ENCODE measurements at regions of chr13 and their contacts with region 1.

Region 1: DNA sequence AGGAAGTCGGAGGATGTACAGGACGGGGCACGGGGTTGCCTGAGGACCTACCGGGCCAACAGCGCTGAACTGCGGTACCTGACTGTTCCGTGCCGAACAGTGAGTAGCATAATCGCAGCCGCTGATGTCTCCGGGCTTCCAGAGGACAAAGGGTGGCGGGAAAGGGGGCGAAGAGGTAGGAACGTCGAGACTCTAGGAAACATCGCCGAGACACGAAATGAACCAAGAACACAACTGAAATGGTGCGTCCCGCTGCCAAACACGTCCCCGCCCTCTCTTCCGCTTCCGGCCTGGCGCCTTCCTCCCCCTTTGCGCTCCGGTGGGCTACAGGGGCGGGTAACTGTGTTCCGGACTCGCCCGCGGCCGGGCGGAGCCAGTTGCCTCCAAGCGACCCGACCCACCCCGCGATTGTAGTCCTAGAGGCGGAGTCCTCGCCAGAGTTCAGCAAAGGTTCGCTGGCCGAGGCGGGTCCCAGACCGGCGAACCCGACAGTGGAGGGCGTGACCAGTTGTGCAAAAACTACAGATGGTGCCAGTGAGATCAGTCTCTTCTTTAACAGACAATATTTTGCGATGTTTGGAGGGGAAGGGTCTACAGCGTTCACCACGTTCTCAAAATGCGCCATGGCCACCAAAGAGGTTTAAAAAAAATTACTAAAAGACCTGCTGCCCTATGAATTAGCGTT is at the start of gene MRPS31:
- DNase-seq: peak; percentile 98
- ATAC-seq: peak; percentile 100
- total RNA-seq, gene MRPS31: 30.0 TPM

Region 2: DNA sequence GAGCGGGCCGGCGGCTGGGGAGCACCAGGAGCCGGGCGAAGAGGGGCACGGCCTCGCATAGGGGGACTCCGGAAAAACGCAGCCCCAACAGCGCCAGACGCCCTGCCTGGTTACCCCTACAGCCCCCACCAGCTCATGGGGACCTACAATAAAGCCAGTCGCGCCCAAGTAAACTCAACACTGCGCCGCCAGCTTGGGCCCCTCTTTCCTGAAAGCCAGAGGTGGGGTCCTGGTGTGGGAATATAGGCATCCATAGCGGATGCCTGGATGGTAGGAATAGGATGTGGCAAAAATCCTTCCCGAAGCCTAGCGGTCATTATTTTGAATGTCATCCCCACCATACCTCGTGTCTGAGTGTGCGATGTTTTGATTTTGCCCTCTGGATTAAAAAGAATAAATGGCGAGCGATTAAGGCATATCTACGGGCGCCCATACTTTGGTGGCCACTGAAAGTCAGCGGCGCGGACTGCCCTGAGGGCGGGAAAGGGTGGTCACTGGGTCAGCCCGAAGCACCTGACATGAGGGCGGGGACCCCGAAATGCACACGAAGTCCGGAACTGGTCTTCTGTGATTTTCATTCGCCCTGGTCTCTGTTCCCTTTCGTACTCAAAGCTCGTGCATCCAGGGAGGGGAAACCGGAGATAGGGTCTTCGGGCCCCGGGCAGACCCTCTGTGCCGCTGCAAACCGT is 1733.1 kb before region 1 on chr13 and contains the starts of genes NHLRC3 and PROSER1:
- intact Hi-C with region 1: loop called (anchors 10 kb)
- DNase-seq: peak; percentile 94
- ATAC-seq: peak; percentile 96
- total RNA-seq, gene NHLRC3: 9.5 TPM
- total RNA-seq, gene PROSER1: 15.9 TPM

Region 3: GRCh38 chr13:40706439-40706838 is 64.6 kb before region 1 on chr13:
- intact Hi-C with region 1: no loop called
- DNase-seq: no peak
- ATAC-seq: no peak

Region 4: DNA sequence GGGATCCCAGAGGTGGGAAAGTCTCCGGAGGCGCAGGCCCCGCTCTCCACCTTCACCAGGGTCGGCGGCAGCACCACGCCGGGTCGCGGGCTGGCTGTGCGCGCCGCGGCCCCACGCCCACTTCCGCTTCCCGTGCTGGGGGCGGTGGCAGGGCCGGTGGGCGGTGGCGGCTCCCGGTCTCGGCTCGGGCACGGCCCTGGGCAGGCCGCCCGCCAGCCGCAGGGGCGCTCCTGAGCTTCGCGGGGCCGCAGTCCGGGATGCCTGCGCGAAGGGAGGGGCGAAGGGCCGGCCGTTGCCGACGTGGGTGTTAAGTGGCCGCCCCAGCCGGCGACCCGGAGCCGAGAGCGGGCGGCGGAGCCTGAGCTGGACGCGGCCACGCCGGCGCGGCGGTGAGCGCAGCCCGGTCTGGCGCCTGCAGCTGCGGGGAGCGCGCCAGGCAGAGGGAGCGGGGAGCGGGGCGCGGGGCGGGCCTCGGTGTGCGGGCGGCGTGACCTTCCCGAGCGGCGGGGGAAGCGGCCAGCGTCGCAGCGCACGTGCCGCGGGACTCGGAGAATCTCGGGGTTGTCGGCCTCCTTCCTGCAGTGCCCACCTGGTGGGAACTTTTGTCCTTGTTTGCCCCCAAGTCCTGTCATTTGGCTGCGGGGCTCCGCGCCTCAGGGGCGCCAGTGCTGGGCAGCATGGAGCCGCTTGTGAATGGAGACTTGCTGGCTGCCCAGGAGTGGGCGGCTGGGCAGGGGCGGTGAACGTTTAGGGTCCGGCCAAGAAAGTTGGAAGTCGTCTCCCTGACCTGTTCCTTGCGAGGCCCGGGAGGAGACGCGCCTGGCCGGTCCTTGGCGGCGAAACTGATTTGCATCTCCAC is 18.4 kb after region 1 on chr13 and contains the start of gene SLC25A15:
- intact Hi-C with region 1: loop called (anchors 1 kb)
- DNase-seq: peak; percentile 90
- ATAC-seq: peak; percentile 96
- total RNA-seq, gene SLC25A15: 4.8 TPM